ENCODE measurements at regions of chr22 and their contacts with region 1.

Region 1: DNA sequence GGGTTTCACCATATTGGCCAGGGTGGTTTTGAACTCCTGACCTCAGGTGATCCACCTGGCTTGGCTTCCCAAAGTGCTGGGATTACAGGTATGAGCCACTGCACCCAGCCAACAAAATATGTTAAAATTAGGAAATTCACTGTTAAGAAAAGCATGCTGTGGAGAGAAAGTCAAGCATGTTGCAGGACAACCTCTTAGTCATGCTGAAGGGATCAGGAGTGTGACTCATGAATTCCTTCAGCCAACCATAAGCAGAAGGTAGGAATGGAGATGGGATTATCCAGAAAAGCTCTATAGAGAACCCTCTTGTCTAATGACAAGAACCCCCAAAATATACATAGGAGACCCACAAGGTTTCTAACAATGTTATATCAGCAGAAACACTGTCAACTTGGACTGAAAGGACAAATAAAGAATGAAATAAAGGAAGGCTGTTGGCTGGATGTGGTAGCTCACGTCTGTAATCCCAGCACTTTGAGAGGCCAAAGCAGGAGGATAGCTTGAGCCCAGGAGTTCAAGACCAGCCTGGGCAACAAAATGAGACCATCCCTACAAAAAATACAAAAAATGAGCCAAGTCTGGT is 16.0 kb downstream of the MRTFA start:
- DNase-seq: peak in 1 of 2 experiments; percentile 82
- H3K4me3 ChIP-seq: no peak overlapping the region
- H3K27ac ChIP-seq: peak overlapping the region; percentile 44
- H3K4me1 ChIP-seq: peaks cover 5% of the 10 kb centered on the region; the same call in 1 of the 2 replicates
- H3K27me3 ChIP-seq: no peaks in the 10 kb centered on the region
- CTCF ChIP-seq: no peak

Region 2: DNA sequence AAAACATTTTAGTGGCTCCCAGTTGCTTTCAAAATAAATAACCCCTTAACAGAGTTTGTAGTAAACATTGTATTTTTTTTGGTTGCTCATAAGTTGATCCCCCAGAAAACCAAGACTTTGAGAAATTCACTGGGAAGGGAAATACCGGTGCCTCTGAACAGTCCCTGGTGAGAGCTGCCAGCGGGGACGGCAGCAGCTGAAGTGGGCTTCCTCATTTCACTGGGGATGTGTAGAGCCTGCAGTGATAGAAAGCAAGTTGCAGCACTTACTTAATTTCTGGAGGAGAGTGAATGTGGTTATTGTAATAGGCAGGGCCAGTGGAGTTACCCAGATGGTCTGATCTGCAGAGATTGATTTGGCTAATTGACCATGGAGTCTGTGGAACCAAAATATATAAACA is 40.2 kb after region 1 on chr22:
- CTCF ChIA-PET with region 1: no interaction called
- POLR2A ChIA-PET with region 1: no interaction called
- intact Hi-C with region 1: no loop called
- DNase-seq: no peak
- H3K4me3 ChIP-seq: no peak overlapping the region
- H3K27ac ChIP-seq: no peak overlapping the region
- H3K4me1 ChIP-seq: no peaks in the 10 kb centered on the region
- H3K27me3 ChIP-seq: no peaks in the 10 kb centered on the region
- CTCF ChIP-seq: no peak

Region 3: DNA sequence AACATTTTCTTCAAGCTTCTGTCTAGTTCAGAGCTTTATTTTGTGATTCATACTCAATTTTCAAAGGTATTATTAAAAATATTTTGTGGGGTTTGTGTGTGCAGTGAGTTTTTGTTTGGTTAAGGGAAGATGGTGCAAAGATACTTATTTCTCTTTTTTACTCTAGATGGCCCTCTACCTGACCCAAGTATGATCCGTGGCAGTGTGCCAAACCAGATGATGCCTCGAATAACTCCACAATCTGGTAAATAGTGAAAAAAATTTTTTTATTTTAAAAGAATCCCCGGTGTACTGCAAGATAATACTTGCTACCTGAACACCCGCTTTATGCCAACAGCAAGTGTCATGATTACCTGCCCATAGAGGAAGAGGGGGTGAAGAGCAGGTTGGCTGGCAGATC is 526.0 kb after region 1 on chr22:
- CTCF ChIA-PET with region 1: no interaction called
- POLR2A ChIA-PET with region 1: interaction called, 15 read pairs
- intact Hi-C with region 1: no loop called
- DNase-seq: no peak
- H3K4me3 ChIP-seq: no peak overlapping the region
- H3K27ac ChIP-seq: no peak overlapping the region
- H3K4me1 ChIP-seq: no peaks in the 10 kb centered on the region
- H3K27me3 ChIP-seq: no peaks in the 10 kb centered on the region
- CTCF ChIP-seq: no peak

Measured in PC-9 (cell line).